Caco-2 (cell line): ENCODE measurements at regions of chr20 and their contacts with region 1.

Region 1: DNA sequence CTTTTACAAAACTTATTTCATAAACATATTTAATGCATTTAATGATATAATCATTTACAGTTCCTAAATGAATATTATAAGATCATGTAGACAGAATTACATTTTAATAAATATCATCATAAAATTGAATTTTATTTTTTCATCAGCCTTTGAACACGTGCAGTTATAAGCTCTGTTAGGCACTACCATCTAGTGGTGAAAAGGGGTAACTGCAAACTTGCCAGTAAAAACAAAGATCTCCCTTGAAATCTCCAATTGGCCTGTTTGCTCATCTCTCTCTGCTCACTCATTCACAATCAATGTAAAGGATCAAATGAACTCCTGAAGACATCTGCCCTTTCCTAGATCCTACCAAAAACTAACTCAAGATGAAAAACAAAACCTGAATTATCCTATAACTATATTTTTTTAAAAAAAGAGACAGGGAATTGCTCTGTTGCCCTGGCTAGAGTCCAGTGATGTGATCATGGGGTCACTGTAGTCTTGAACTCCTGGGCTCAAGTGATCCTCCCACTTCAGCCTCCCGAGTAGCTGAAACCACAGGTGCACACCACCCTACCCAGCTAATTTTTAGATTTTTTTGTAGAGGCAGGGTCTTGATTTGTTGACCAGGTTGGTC is 31.7 kb downstream of the SAMHD1 start:
- DNase-seq: peak in 1 of 2 experiments; percentile 78
- H3K4me3 ChIP-seq: no peak overlapping the region
- H3K4me3 Mint-ChIP-seq: no peak overlapping the region
- H3K27ac Mint-ChIP-seq: no peak overlapping the region
- H3K4me1 ChIP-seq: peaks cover 10% of the 10 kb centered on the region
- H3K4me1 Mint-ChIP-seq: peaks cover 15% of the 10 kb centered on the region
- H3K27me3 ChIP-seq: no peaks in the 10 kb centered on the region
- H3K27me3 Mint-ChIP-seq: no peaks in the 10 kb centered on the region
- CTCF ChIP-seq: peak; percentile 98 to 99

Region 2: DNA sequence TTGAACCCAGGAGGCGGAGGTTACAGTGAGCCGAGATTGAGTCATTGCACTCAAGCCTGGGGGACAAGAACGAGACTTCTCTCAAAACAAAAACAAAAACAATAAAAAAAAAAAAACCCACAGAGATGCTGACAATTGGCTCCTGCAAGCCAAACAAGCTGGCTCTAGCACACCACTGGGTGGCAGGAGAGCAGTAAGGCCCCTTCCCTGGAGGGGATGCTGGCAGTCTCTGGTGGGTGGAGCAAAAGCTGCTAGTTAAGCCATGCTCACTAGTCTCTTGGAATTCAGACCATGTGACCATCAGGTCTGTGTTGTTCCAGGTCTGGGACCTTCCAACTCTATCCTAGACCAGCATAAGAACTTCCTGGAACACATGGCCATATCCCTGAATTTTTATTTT is 127.4 kb before region 1 on chr20:
- CTCF ChIA-PET with region 1: interaction called, 6 read pairs
- POLR2A ChIA-PET with region 1: no interaction called
- intact Hi-C with region 1: loop called (anchors 1 kb)
- DNase-seq: peak; percentile 94 to 95
- H3K4me3 ChIP-seq: no peak overlapping the region
- H3K4me3 Mint-ChIP-seq: no peak overlapping the region
- H3K27ac Mint-ChIP-seq: no peak overlapping the region
- H3K4me1 ChIP-seq: no peaks in the 10 kb centered on the region
- H3K4me1 Mint-ChIP-seq: no peaks in the 10 kb centered on the region
- H3K27me3 ChIP-seq: no peaks in the 10 kb centered on the region
- H3K27me3 Mint-ChIP-seq: no peaks in the 10 kb centered on the region
- CTCF ChIP-seq: peak; percentile 67 to 92

Region 3: GRCh38 chr20:36908603-36909002 is 11.2 kb before region 1 on chr20:
- CTCF ChIA-PET with region 1: interaction called, 13 read pairs
- POLR2A ChIA-PET with region 1: no interaction called
- intact Hi-C with region 1: no loop called
- DNase-seq: no peak
- H3K4me3 ChIP-seq: no peak overlapping the region
- H3K4me3 Mint-ChIP-seq: no peak overlapping the region
- H3K27ac Mint-ChIP-seq: no peak overlapping the region
- H3K4me1 ChIP-seq: no peaks in the 10 kb centered on the region
- H3K4me1 Mint-ChIP-seq: no peaks in the 10 kb centered on the region
- H3K27me3 ChIP-seq: no peaks in the 10 kb centered on the region
- H3K27me3 Mint-ChIP-seq: no peaks in the 10 kb centered on the region
- CTCF ChIP-seq: no peak

Region 4: DNA sequence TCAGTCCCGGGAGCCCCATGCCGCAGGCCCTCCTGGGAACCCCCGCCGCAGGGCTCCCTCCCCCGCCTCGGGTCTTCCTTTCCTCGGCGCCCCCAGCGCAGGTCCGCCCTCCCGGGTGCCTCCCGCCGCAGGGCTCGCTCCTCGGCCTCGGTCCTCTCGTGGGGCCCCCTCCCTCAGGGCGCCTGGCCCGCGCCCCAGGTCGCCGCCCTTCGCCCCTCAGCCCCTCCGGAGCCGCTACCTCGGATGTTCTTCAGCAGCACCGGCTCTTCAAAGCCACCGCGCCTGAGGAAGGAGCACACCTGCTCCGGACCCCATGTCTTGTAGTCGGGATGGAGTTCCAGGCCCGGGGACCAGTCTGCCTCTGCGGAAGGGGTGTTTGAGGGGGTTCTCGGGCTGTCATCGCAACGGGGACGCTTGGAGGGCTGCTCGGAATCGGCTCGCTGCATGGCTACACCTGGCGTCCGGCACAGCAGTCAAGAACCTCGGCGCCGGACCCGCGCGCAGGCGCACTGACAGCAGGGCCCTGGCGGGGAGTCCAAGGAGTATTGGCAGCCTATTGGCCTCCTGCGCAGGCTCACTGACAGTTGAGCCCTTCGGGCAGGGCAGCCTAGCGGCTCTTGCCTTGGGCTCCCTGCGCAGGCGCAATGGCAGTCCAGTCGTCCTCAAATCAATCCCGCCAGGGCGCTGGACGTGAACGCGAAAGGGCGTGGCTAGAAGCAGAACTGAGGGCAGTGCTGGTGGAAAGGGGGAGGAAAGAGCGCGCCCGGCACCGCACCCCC is 31.6 kb after region 1 on chr20 and contains the start of gene SAMHD1:
- CTCF ChIA-PET with region 1: no interaction called
- POLR2A ChIA-PET with region 1: no interaction called
- intact Hi-C with region 1: loop called (anchors 2 kb)
- DNase-seq: peak; percentile 100
- H3K4me3 ChIP-seq: peak within 1 kb of the TSS; percentile 95
- H3K4me3 Mint-ChIP-seq: peak within 1 kb of the TSS; percentile 98
- H3K27ac Mint-ChIP-seq: peak within 1 kb of the TSS; percentile 96
- H3K4me1 ChIP-seq: peaks cover 3% of the 10 kb centered on the region; the same call in 1 of the 2 replicates
- H3K4me1 Mint-ChIP-seq: peaks cover 18% of the 10 kb centered on the region
- H3K27me3 ChIP-seq: no peaks in the 10 kb centered on the region
- H3K27me3 Mint-ChIP-seq: no peaks in the 10 kb centered on the region
- CTCF ChIP-seq: peak in 1 of 2 experiments; percentile 16
- total RNA-seq, gene SAMHD1: 56.8 and 63.0 TPM in 2 replicates